Posterior vena cava (tissue), 2 donors: ENCODE measurements at regions of chr3 and their contacts with region 1.

Region 1: GRCh38 chr3:188323067-188323842 is 169.3 kb downstream of the LPP start:
- DNase-seq: no peak

Region 2: DNA sequence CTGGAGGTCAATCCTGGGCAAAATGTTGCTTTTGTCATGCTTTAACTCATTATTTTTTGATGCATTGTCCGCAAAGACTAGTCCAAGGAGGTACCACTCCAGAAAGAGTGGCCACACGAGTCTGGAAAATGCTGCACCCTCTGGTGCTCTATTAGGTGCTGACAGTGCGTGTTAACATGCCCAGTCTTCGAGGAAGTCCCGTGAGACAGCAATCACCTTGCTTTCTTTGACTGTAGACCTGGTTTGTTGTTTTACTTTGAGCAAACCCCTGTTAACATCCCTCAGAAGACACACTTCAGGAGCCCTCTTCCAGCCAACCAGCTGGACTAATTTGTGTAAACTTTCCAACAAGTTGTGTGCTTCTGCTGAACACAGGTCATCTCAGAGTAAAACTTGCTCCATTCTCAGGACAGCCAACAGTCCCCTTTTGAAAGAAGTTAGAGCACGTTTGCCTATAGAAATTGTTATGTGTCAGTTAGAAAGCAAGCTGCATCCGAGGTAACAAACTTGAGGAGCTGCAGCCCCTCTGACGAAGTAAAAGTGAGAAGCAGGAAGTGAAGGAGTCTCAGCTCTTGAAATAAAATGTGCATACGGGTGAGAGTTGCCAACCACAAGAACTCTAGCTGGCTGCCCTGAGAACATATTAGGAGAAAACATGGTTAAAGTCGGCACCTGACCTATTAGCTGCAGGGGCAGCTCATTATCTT is 35.7 kb after region 1 on chr3:
- intact Hi-C with region 1: no loop called
- DNase-seq: no peak

Region 3: DNA sequence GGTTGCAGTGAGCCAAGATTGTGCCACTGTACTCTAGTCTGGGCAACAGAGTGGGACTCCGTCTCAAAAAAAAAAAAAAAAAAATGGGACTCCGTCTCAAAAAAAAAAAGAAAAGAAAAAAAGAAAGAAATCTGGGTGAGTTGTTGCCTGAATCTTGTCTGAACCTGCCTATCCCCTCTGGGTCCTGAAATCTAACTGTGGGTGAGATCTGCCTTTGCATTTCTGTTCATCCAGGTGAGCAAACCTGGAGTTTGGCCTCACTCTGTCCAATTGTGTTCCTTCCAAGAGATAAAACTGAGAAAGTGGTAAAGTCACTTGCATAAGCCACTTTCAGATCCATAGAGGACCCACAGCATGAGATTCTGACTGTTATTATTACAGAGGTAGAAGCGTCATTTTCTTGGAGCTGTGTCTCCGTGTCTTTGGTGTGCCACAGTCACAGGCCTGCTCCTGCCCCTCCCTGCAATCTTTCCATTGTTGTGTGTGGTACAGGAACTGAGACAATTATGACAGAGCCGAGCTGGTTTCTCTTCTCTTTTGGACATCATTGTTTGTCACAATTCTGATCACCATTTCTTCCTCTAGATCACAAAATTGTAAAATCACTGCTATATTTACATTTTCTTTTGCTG is 66.6 kb after region 1 on chr3:
- intact Hi-C with region 1: loop called in 1 of 2 experiments (anchors 2 kb)
- DNase-seq: no peak